Right ventricle myocardium superior (tissue), 1 donor: ENCODE measurements at regions of chr11 and their contacts with region 1.

Region 1: GRCh38 chr11:118907051-118908042 is 18.4 kb downstream of the BCL9L start:
- DNase-seq: peak; percentile 88
- ATAC-seq: peak; percentile 55

Region 2: GRCh38 chr11:118929501-118930093 is 22.2 kb after region 1 on chr11:
- intact Hi-C with region 1: loop called (anchors 1 kb)
- DNase-seq: peak; percentile 87
- ATAC-seq: peak; percentile 59